Left colon (tissue), 2 donors: ENCODE measurements at regions of chr1 and their contacts with region 1.

Region 1: GRCh38 chr1:100265931-100266740 is at the start of gene RTCA:
- DNase-seq: peak; percentile 96 to 98
- ATAC-seq: peak; percentile 98
- total RNA-seq, gene RTCA: 37.1 to 40.5 TPM

Region 2: GRCh38 chr1:100109554-100110066 is 156.5 kb before region 1 on chr1:
- intact Hi-C with region 1: no loop called
- DNase-seq: no peak
- ATAC-seq: no peak

Region 3: DNA sequence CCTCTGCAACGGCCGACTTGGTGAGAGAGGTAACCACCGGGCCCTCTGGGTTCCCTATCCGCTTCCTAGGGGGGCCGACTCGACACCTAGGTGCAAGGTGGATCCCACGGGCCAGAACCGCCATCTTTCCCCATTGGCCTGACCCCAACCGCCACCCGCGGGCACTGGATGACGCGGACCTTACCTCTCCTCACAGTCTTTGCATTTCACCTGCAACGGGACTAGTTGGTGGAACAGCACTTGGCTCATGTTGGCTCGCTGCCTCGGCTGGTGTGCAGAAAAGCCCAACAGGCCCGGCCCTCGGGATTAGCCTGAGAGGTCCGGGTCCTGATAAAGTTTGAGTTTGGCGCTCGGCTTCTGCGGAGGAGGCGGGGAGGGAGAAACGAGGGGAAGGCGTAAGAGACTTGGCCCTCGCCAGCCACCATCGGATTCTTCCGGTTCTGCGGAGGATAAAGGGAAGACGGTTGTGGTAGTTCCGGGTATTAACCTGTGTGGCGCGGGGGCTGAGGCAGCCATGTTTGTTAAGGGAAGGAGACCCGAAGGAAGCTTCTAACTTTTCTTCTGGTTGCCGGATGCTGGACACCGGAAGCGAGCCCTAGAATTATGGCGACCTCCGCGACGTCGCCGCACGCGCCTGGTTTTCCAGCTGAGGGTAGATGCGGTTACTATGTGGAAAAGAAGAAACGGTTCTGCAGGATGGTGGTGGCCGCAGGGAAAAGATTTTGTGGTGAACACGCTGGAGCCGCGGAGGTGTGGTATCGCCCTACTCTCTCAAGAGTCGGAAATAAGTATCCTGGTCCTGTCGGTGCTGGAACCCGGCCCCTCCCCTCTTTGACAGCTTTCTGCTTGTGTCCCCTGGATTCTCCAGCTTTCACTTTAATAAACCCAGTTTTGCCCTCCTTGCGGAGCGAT is 133.3 kb before region 1 on chr1 and contains the starts of genes SASS6 and TRMT13:
- intact Hi-C with region 1: loop called in 1 of 2 experiments (anchors 10 kb)
- DNase-seq: peak; percentile 96 to 98
- ATAC-seq: peak; percentile 98
- total RNA-seq, gene SASS6: 2.7 to 3.8 TPM
- total RNA-seq, gene TRMT13: 8.9 to 11.5 TPM

Region 4: GRCh38 chr1:100414693-100415497 is 148.8 kb after region 1 on chr1:
- intact Hi-C with region 1: no loop called
- DNase-seq: no peak
- ATAC-seq: peak; percentile 59